RWPE1 (cell line): ENCODE measurements at regions of chr20 and their contacts with region 1.

Region 1: DNA sequence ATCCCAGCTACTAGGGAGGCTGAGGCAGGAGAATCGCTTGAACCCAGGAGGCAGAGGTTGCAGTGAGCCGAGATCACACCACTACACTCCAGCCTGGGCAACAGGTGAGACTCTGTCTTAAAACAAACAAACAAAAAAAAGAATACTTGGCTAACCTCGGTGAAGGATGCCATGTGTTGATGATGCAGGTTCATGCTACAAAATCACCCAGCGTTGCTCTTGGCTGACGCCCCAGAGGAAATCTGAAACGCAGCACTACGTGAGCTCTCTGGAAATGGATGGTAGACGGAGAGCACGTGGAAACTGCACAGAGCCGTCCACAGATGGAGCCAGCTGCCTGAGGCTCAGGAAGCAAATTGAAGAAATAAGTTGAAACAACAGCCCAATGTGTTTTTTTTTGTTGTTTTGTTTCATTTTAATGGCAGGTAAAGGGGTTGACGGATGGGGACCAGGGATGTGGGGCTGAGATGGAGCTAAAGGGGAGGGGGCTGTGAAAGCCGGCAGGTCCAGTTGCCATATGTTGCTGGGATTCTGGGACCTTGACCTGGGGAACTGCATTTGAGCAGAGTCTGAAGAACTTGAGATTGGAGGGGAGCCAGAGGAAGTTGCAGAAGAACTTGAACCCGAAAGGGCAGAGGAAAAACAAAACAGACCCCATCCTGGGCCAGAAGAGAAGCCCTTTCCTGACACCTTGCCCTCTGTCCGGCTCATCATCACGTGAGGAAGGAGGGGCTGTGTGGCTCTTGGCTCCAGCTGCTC is 12.8 kb upstream of the MANBAL start:
- DNase-seq: peak; percentile 71
- H3K27ac ChIP-seq: peak overlapping the region; percentile 60
- CTCF ChIP-seq: peak; percentile 86

Region 2: GRCh38 chr20:37114012-37114411 is 162.7 kb before region 1 on chr20:
- CTCF ChIA-PET with region 1: no interaction called
- POLR2A ChIA-PET with region 1: no interaction called
- DNase-seq: no peak
- H3K27ac ChIP-seq: no peak overlapping the region
- CTCF ChIP-seq: no peak

Region 3: DNA sequence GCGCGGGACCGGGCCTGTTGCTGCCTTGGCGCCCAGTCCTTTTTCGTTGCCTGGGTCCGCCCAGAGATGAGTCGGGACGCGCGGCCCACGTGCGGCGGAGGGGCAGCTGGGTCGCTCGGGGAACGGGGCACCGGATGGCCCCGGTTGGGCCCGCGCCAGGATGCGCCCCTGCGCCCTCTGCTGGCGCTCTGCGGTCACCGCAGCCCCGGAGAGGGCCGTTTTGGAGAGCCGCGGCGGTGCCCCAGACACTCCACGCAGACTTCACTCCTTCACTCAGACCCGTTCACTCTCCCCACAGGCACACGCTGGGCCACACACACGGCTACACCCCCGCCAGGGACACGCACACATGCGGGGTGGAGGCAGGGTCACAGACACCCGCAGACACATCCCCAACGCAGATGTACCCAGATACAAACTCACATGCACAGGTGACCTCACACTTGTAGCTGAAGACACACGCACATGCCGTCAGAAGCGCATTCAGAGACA is 108.1 kb after region 1 on chr20:
- CTCF ChIA-PET with region 1: interaction called, 12 read pairs
- POLR2A ChIA-PET with region 1: interaction called, 7 read pairs
- DNase-seq: peak; percentile 75
- H3K27ac ChIP-seq: peak overlapping the region; percentile 69
- CTCF ChIP-seq: peak; percentile 98

Region 4: GRCh38 chr20:37396416-37397075 is 119.9 kb after region 1 on chr20:
- CTCF ChIA-PET with region 1: interaction called, 10 read pairs
- POLR2A ChIA-PET with region 1: no interaction called
- DNase-seq: no peak
- H3K27ac ChIP-seq: peak overlapping the region; percentile 68
- CTCF ChIP-seq: no peak

Region 5: DNA sequence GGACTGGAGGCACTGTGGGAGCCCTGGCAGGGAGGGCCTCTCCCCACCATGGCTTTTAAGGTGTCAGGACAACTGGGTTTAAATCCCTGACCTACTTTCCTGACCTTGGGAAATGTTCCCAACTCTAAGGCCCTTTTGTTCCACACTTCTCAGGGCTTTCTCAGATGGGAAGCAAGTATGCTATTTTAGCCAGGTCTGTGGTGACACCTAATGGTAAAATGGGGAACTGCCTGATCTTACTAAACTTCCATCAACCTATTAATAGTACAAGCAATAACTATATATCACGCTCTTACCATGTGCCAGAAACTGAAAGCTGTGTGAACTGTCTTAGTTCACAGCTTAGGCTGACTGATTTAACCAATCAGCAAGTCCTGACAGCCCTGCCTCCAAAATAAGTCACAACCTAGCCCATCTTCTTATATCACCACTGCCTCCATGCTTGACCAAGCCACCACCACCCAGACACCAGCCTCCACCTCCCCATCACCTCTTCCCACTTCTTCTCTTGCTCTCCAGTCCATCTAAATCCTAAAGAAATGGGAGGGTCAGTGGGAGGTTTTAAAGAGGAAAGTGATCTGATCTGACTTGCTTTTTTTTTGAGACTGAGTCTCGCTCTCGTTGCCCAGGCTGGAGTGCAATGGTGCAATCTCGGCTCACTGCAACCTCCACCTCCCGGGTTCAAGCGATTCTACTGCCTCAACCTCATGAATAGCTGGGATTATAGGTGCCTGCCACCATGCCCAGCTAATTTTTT is 257.9 kb after region 1 on chr20:
- CTCF ChIA-PET with region 1: interaction called, 10 read pairs
- POLR2A ChIA-PET with region 1: no interaction called
- DNase-seq: peak; percentile 70
- H3K27ac ChIP-seq: no peak overlapping the region
- CTCF ChIP-seq: peak; percentile 95